ENCODE measurements at regions of chr12 and their contacts with region 1.

Region 1: GRCh38 chr12:15856097-15856982 is 25.8 kb upstream of the STRAP start:
- DNase-seq: peak; percentile 56 to 62 (median 59)
- H3K4me3 ChIP-seq: no peak overlapping the region
- H3K4me3 Mint-ChIP-seq: no peak overlapping the region
- H3K27ac ChIP-seq: no peak overlapping the region
- H3K27ac Mint-ChIP-seq: no peak overlapping the region
- H3K4me1 ChIP-seq: no peaks in the 10 kb centered on the region
- H3K4me1 Mint-ChIP-seq: no peaks in the 10 kb centered on the region
- H3K27me3 ChIP-seq: peaks cover 1% of the 10 kb centered on the region
- H3K27me3 Mint-ChIP-seq: peaks cover 7 to 17% of the 10 kb centered on the region in 2 donors

Region 2: GRCh38 chr12:15151161-15152120 is 704.9 kb before region 1 on chr12:
- CTCF ChIA-PET with region 1: no interaction called
- POLR2A ChIA-PET with region 1: no interaction called
- intact Hi-C with region 1: loop called (anchors 5 kb)
- DNase-seq: peak in 1 of 5 donors; percentile 1
- H3K4me3 ChIP-seq: no peak overlapping the region
- H3K4me3 Mint-ChIP-seq: no peak overlapping the region
- H3K27ac ChIP-seq: no peak overlapping the region
- H3K27ac Mint-ChIP-seq: no peak overlapping the region
- H3K4me1 ChIP-seq: no peaks in the 10 kb centered on the region
- H3K4me1 Mint-ChIP-seq: no peaks in the 10 kb centered on the region
- H3K27me3 ChIP-seq: no peaks in the 10 kb centered on the region
- H3K27me3 Mint-ChIP-seq: peaks cover 5 to 13% of the 10 kb centered on the region in 2 donors

Region 3: GRCh38 chr12:15276088-15276698 is 580.1 kb before region 1 on chr12:
- CTCF ChIA-PET with region 1: interaction called, 9 read pairs
- POLR2A ChIA-PET with region 1: no interaction called
- intact Hi-C with region 1: loop called (anchors 1 kb)
- DNase-seq: peak in 1 of 5 donors; percentile 0
- H3K4me3 ChIP-seq: no peak overlapping the region
- H3K4me3 Mint-ChIP-seq: no peak overlapping the region
- H3K27ac ChIP-seq: no peak overlapping the region
- H3K27ac Mint-ChIP-seq: no peak overlapping the region
- H3K4me1 ChIP-seq: peaks cover 10% of the 10 kb centered on the region
- H3K4me1 Mint-ChIP-seq: peaks cover 2 to 12% (median 7%) of the 10 kb centered on the region in 4 donors
- H3K27me3 ChIP-seq: no peaks in the 10 kb centered on the region
- H3K27me3 Mint-ChIP-seq: peaks cover 5 to 9% of the 10 kb centered on the region in 2 donors

Region 4: GRCh38 chr12:15584366-15585041 is 271.8 kb before region 1 on chr12:
- CTCF ChIA-PET with region 1: interaction called, 69 read pairs
- POLR2A ChIA-PET with region 1: no interaction called
- intact Hi-C with region 1: no loop called
- DNase-seq: peak in 4 of 5 donors; percentile 47 to 51 (median 49)
- H3K4me3 ChIP-seq: no peak overlapping the region
- H3K4me3 Mint-ChIP-seq: no peak overlapping the region
- H3K27ac ChIP-seq: no peak overlapping the region
- H3K27ac Mint-ChIP-seq: no peak overlapping the region
- H3K4me1 ChIP-seq: no peaks in the 10 kb centered on the region
- H3K4me1 Mint-ChIP-seq: peaks cover 0 to 7% (median 4%) of the 10 kb centered on the region in 4 donors
- H3K27me3 ChIP-seq: no peaks in the 10 kb centered on the region
- H3K27me3 Mint-ChIP-seq: no peaks in the 10 kb centered on the region

Region 5: GRCh38 chr12:15590180-15590826 is 266.0 kb before region 1 on chr12:
- CTCF ChIA-PET with region 1: interaction called, 69 read pairs
- POLR2A ChIA-PET with region 1: no interaction called
- intact Hi-C with region 1: loop called (anchors 1 kb)
- DNase-seq: peak; percentile 53 to 66 (median 63)
- H3K4me3 ChIP-seq: no peak overlapping the region
- H3K4me3 Mint-ChIP-seq: peak overlapping the region; percentile 68 to 88 (median 80)
- H3K27ac ChIP-seq: no peak overlapping the region
- H3K27ac Mint-ChIP-seq: peak overlapping the region in 6 of 7 donors; percentile 28 to 90 (median 40)
- H3K4me1 ChIP-seq: peaks cover 9% of the 10 kb centered on the region
- H3K4me1 Mint-ChIP-seq: peaks cover 3 to 10% (median 8%) of the 10 kb centered on the region in 4 donors
- H3K27me3 ChIP-seq: no peaks in the 10 kb centered on the region
- H3K27me3 Mint-ChIP-seq: peaks cover 3 to 5% of the 10 kb centered on the region in 2 donors

Region 6: DNA sequence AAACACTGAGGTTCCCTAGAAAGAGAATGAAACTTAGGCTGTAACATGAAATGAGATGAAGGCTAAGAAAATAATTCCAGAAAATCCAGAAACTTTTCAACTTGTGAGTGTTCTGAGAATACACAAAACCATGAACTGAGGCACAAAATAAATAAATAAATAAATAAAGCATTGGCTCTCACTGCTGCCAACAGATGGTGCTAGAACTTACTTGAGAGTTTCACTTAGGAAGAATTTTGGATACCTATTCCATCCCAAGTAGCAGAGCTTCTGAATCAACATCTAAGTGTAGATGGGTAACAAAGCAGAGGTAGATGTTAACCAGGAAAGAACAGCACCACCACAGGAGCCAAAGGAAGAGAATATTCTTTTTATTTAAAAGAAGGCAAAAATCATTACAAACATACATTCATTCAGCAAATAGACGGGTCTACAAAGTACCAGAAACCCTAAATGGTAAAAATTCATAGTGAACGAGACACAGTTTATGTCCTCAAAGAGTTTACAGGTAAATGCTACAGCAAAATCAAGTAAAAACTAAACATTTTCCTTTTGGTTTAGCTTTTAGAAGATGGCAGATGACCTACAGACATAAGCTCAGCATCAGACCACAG is 83.8 kb before region 1 on chr12:
- CTCF ChIA-PET with region 1: interaction called, 35 read pairs
- POLR2A ChIA-PET with region 1: no interaction called
- intact Hi-C with region 1: loop called (anchors 1 kb)
- DNase-seq: peak in 3 of 5 donors; percentile 9 to 26 (median 14)
- H3K4me3 ChIP-seq: no peak overlapping the region
- H3K4me3 Mint-ChIP-seq: no peak overlapping the region
- H3K27ac ChIP-seq: no peak overlapping the region
- H3K27ac Mint-ChIP-seq: no peak overlapping the region
- H3K4me1 ChIP-seq: no peaks in the 10 kb centered on the region
- H3K4me1 Mint-ChIP-seq: peaks cover 0 to 4% (median 1%) of the 10 kb centered on the region in 4 donors
- H3K27me3 ChIP-seq: no peaks in the 10 kb centered on the region
- H3K27me3 Mint-ChIP-seq: peaks cover 3 to 8% of the 10 kb centered on the region in 2 donors

Region 7: GRCh38 chr12:15789220-15790171 is 66.8 kb before region 1 on chr12 and contains the start of gene EPS8:
- CTCF ChIA-PET with region 1: interaction called, 3 read pairs
- POLR2A ChIA-PET with region 1: no interaction called
- intact Hi-C with region 1: loop called (anchors 5 kb)
- DNase-seq: peak; percentile 85 to 90 (median 90)
- H3K4me3 ChIP-seq: peak within 1 kb of the TSS; percentile 58 to 78
- H3K4me3 Mint-ChIP-seq: peak within 1 kb of the TSS; percentile 90 to 98 (median 96)
- H3K27ac ChIP-seq: peak within 1 kb of the TSS; percentile 38
- H3K27ac Mint-ChIP-seq: peak within 1 kb of the TSS; percentile 86 to 93 (median 90)
- H3K4me1 ChIP-seq: peaks cover 19% of the 10 kb centered on the region
- H3K4me1 Mint-ChIP-seq: peaks cover 12 to 19% (median 15%) of the 10 kb centered on the region in 4 donors
- H3K27me3 ChIP-seq: peaks cover 21% of the 10 kb centered on the region
- H3K27me3 Mint-ChIP-seq: peaks cover 12 to 29% of the 10 kb centered on the region in 2 donors
- total RNA-seq, gene EPS8: 2.6 to 3.8 TPM

Region 8: DNA sequence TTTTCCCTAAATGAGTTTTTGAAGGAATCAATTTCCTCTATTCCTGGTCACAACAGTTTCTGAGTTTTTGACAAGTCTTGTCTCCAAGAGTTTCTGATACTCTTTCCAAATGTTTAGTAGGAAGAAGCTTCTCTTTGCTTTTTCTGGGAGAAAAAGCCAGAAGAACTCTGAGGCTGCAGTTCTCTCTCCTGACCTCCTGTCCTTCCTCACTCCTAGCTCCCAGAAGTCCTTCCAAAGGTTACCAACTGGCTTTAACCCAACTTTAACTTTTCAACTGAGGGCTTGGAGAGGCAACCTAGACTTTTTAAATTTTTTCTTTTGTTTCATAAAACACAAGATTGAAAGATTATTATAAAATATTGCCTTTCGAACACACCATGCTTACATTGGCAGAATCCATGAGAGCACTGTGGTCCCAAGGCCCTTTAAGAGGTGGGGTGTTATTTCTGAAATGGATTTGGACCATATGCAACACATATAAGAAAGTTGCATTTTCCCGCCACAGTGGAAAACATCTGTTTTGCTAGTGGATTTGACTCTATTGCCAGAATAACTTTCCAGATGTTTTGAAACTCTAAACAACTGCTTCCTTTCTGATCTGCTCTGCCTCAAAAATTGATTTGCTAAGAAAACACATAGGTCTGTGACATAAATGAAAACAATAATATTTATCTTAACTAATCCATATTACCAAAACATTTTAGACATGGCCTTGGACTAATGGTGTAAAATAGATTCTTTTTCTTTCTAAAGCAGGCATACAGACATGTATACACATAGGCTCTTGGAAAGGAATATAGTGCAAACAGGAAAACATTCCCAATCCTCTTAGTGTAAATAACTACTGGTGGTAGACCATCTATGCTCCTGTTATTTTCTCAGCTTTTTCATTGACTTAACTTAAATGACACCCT is 44.9 kb before region 1 on chr12:
- CTCF ChIA-PET with region 1: no interaction called
- POLR2A ChIA-PET with region 1: no interaction called
- intact Hi-C with region 1: no loop called
- DNase-seq: no peak
- H3K4me3 ChIP-seq: no peak overlapping the region
- H3K4me3 Mint-ChIP-seq: no peak overlapping the region
- H3K27ac ChIP-seq: no peak overlapping the region
- H3K27ac Mint-ChIP-seq: no peak overlapping the region
- H3K4me1 ChIP-seq: no peaks in the 10 kb centered on the region
- H3K4me1 Mint-ChIP-seq: no peaks in the 10 kb centered on the region
- H3K27me3 ChIP-seq: peaks cover 4% of the 10 kb centered on the region
- H3K27me3 Mint-ChIP-seq: peaks cover 5 to 7% of the 10 kb centered on the region in 2 donors

Region 9: DNA sequence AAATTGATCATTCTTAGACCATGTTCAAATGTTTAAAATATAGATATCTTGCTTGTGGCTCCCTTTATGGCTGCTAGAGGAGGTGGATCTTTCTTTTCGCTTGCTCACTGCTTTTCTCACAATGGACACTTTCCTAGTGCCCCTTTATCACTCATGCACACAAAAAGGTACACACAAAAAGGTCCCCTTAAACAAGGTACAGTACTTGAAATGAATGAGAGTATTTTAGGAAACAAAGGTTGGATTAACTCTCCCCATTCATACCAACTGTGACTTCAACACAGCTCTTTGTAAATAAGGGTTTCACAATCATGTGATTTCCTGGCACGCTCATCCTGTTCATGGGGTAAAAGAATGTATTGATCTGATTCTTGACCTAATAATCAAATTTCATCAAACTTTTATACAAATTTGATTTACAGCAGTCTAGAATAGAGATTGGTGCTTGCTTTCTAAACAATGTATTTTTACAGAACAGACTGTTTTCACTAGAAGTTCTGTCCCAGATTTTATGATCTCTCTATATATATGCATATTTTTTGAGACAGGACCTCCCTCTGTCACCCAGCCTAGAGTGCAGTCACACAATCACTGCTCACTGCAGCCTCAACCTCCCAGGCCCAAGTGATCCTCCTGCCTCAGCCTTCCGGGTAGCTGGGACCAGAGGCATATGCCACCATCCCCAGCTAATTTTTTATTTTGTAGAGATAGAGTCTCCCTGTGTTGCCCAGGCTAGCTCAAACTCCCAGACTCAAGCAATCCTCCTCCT is 32.8 kb before region 1 on chr12:
- CTCF ChIA-PET with region 1: no interaction called
- POLR2A ChIA-PET with region 1: no interaction called
- intact Hi-C with region 1: no loop called
- DNase-seq: no peak
- H3K4me3 ChIP-seq: no peak overlapping the region
- H3K4me3 Mint-ChIP-seq: no peak overlapping the region
- H3K27ac ChIP-seq: no peak overlapping the region
- H3K27ac Mint-ChIP-seq: no peak overlapping the region
- H3K4me1 ChIP-seq: no peaks in the 10 kb centered on the region
- H3K4me1 Mint-ChIP-seq: no peaks in the 10 kb centered on the region
- H3K27me3 ChIP-seq: no peaks in the 10 kb centered on the region
- H3K27me3 Mint-ChIP-seq: peaks cover 6 to 16% of the 10 kb centered on the region in 2 donors

Region 10: GRCh38 chr12:15982471-15982870 is 126.1 kb after region 1 on chr12:
- CTCF ChIA-PET with region 1: no interaction called
- POLR2A ChIA-PET with region 1: no interaction called
- intact Hi-C with region 1: no loop called
- DNase-seq: no peak
- H3K4me3 ChIP-seq: no peak overlapping the region
- H3K4me3 Mint-ChIP-seq: no peak overlapping the region
- H3K27ac ChIP-seq: no peak overlapping the region
- H3K27ac Mint-ChIP-seq: no peak overlapping the region
- H3K4me1 ChIP-seq: no peaks in the 10 kb centered on the region
- H3K4me1 Mint-ChIP-seq: no peaks in the 10 kb centered on the region
- H3K27me3 ChIP-seq: no peaks in the 10 kb centered on the region
- H3K27me3 Mint-ChIP-seq: no peaks in the 10 kb centered on the region

Measured in CD4-positive, alpha-beta memory T cell (primary cell).